PC-3 (cell line): ENCODE measurements at regions of chr20 and their contacts with region 1.

Region 1: GRCh38 chr20:25247956-25248785 is at the start of gene PYGB:
- DNase-seq: peak; percentile 79
- ATAC-seq: peak; percentile 64
- H3K4me3 ChIP-seq: peak within 1 kb of the TSS; percentile 92
- H3K27ac ChIP-seq: peak within 1 kb of the TSS; percentile 72
- H3K4me1 ChIP-seq: peaks cover 50% of the 10 kb centered on the region
- H3K27me3 ChIP-seq: no peaks in the 10 kb centered on the region
- CTCF ChIP-seq: no peak
- total RNA-seq, gene PYGB: 216 and 245 TPM in 2 replicates

Region 2: GRCh38 chr20:25136643-25137559 is 111.3 kb before region 1 on chr20:
- CTCF ChIA-PET with region 1: no interaction called
- POLR2A ChIA-PET with region 1: no interaction called
- intact Hi-C with region 1: loop called (anchors 10 kb)
- DNase-seq: peak; percentile 78
- ATAC-seq: peak; percentile 85
- H3K4me3 ChIP-seq: no peak overlapping the region
- H3K27ac ChIP-seq: no peak overlapping the region
- H3K4me1 ChIP-seq: peaks cover 19% of the 10 kb centered on the region
- H3K27me3 ChIP-seq: no peaks in the 10 kb centered on the region
- CTCF ChIP-seq: no peak

Region 3: GRCh38 chr20:25195014-25195961 is 52.9 kb before region 1 on chr20 and contains the start of gene ENTPD6:
- CTCF ChIA-PET with region 1: interaction called, 5 read pairs
- POLR2A ChIA-PET with region 1: interaction called, 4 read pairs
- intact Hi-C with region 1: loop called (anchors 1 kb)
- DNase-seq: peak; percentile 93
- ATAC-seq: peak; percentile 67
- H3K4me3 ChIP-seq: peak within 1 kb of the TSS; percentile 86
- H3K27ac ChIP-seq: peak within 1 kb of the TSS; percentile 76
- H3K4me1 ChIP-seq: peaks cover 37% of the 10 kb centered on the region
- H3K27me3 ChIP-seq: no peaks in the 10 kb centered on the region
- CTCF ChIP-seq: peak; percentile 41; the same call in 1 of the 2 replicates
- total RNA-seq, gene ENTPD6: 122 and 150 TPM in 2 replicates

Region 4: DNA sequence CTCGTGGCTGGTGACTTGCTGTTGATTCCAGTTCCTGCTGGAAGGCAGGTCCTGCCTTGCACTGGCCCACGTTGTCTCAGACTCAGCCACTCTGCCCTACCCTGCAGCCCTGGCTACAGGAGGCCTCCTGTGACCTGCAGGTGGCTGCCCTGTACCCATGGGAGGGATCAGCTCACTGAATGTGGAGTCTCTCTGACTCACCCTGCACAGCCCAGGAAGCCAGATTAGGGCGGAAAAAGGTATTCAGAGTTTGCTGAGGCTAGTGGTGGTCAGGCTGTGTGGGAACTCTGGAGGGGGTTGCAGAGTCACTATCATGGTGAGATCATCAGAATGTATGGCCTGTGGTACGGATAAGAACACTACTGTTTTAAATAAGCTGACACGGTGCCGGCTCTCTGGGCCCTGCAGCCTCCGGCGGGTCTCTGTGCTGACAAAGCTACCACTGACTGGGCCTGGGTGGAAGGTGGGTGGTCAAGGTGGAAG is 25.0 kb before region 1 on chr20:
- CTCF ChIA-PET with region 1: interaction called, 32 read pairs
- POLR2A ChIA-PET with region 1: interaction called, 32 read pairs
- intact Hi-C with region 1: loop called (anchors 1 kb)
- DNase-seq: peak; percentile 99
- ATAC-seq: peak; percentile 94
- H3K4me3 ChIP-seq: no peak overlapping the region
- H3K27ac ChIP-seq: peak overlapping the region; percentile 95
- H3K4me1 ChIP-seq: peaks cover 38% of the 10 kb centered on the region
- H3K27me3 ChIP-seq: no peaks in the 10 kb centered on the region
- CTCF ChIP-seq: peak; percentile 73

Region 5: DNA sequence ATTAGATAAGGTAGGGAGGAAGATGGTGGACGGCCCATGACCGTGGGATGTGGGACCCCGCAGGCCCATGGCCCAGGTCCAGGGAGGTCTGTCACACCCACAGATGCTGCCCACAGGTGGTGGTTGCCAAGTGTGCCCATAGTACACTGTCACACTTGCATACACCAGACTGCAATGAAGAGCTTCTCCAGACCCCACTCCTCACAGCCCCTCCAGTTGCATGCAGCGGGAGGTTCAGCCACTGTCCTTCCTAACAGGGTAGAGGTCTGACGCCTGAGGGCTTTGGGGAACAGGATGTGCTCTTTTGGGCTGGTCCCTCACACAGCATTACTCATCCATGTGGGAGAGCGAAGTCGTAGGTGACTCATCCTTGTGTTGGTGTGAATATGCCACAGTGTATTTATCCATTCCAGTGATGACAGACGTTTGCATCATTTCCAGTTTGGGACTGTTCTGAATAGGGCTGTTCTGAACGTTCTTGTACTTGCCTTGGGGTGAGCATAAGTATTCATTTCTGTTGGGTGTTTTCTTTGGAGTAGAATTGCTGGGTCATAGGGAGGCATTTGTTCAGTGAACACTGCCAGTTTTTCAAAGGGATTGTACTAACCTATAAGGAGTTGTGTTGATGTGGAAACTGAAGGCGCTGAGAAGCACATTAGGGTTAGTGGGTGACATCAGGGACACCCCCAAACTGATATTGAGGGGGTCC is 10.4 kb before region 1 on chr20:
- CTCF ChIA-PET with region 1: interaction called, 9 read pairs
- POLR2A ChIA-PET with region 1: interaction called, 18 read pairs
- intact Hi-C with region 1: loop called (anchors 1 kb)
- DNase-seq: peak; percentile 100
- ATAC-seq: peak; percentile 72
- H3K4me3 ChIP-seq: peak overlapping the region; percentile 27; the same call in 1 of the 2 replicates
- H3K27ac ChIP-seq: peak overlapping the region; percentile 97
- H3K4me1 ChIP-seq: peaks cover 72% of the 10 kb centered on the region
- H3K27me3 ChIP-seq: no peaks in the 10 kb centered on the region
- CTCF ChIP-seq: no peak